Cardiac septum (tissue), 1 donor: ENCODE measurements at regions of chr20 and their contacts with region 1.

Region 1: GRCh38 chr20:62143118-62143973 is at the starts of genes PSMA7 and SS18L1:
- DNase-seq: peak; percentile 95
- total RNA-seq, gene PSMA7: 198 TPM
- total RNA-seq, gene SS18L1: 8.0 TPM

Region 2: DNA sequence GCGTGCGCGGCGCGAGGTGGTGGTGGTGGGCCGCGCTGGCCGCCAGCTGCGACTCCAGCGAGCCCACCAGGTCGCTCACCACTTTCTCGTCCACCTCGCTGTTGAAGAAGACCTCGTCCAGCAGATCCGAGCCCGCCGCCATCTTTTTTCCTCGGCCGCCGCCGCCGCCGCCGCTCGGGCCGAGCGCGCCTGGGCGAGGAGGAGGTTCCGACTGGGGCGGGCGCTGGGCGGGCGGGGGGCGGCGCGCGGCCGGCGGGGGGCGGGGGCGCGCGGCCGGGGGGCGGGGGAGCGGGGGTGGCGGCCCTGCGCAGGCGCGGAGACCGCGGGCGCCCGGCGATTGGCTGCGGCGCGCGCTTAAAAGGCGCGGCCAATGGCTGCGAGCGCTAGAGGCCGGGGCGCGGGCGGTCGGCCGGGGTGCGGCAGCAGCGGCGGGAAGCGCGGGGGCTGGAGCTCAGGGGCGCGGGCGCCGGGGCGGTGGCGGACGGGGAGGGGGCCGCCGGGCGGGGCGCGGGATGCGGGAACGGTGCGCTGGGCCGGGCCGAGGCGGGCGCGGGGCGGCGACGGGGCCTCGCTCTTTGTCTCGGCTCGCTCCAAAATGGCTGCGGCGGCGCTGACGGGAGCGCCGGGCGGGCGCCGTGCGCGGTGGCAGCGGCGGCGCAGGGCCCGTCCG is 77.5 kb before region 1 on chr20 and contains the start of gene TAF4:
- intact Hi-C with region 1: loop called (anchors 5 kb)
- DNase-seq: peak; percentile 90
- total RNA-seq, gene TAF4: 13.6 TPM